Vagina (tissue), 2 donors: ENCODE measurements at regions of chr1 and their contacts with region 1.

Region 1: DNA sequence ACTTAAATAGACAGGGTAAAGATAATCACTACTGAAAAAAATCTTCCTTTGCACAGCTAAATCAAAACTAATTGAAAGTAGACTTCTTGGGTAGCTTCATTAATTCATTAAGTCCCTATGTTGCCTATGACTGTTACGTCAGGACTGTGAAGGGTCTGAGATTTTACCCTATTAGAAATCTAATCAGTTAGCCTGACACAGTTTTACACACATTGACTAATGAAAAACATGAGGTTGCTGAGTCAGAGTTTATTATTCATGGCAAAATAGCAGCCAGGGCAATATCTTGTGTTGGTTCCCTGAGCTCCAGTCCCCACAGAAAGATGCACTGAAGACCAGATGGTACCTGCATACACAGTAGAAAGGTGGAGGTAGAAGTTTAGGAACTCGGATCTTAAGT is 262.5 kb upstream of the ZP4 start:
- DNase-seq: no peak
- H3K4me3 ChIP-seq: no peak overlapping the region
- H3K27ac ChIP-seq: no peak overlapping the region
- H3K4me1 ChIP-seq: no peaks in the 10 kb centered on the region
- H3K27me3 ChIP-seq: no peaks in the 10 kb centered on the region
- CTCF ChIP-seq: no peak
- POLR2A ChIP-seq: no peak

Region 2: GRCh38 chr1:237610157-237610556 is 543.1 kb before region 1 on chr1:
- intact Hi-C with region 1: no loop called
- DNase-seq: no peak
- H3K4me3 ChIP-seq: no peak overlapping the region
- H3K27ac ChIP-seq: no peak overlapping the region
- H3K4me1 ChIP-seq: no peaks in the 10 kb centered on the region
- H3K27me3 ChIP-seq: no peaks in the 10 kb centered on the region
- CTCF ChIP-seq: no peak
- POLR2A ChIP-seq: no peak

Region 3: DNA sequence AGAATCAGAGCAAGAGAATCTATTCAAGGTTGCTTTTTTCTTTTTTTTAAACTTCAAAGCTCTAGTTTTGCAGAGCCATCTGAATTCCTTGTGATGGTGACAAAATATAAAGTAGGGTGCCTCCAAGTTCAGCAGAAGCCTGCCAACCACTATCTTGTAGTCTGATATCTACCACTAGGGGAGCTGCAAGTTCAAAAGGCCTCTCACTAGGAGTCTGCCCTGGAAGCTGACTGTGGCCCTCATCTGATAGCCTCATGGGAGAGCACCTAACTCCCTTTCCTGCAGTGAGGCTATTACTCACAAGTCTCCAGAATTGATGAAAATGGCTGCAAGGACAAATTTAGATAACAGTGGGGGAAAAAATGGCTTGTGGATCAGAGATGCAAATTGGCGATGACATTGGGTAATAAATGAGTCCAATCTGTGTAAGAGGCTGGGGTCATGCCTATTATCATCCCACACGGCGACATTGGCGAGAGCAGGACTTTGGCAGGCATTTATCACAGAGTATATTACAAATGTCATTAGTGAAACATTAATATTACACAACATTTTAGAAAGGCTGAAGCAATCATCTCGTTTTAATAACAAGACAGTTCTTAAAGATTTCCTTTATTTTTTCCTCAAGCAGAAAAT is 251.8 kb before region 1 on chr1:
- intact Hi-C with region 1: no loop called
- DNase-seq: no peak
- H3K4me3 ChIP-seq: no peak overlapping the region
- H3K27ac ChIP-seq: no peak overlapping the region
- H3K4me1 ChIP-seq: no peaks in the 10 kb centered on the region
- H3K27me3 ChIP-seq: no peaks in the 10 kb centered on the region
- CTCF ChIP-seq: no peak
- POLR2A ChIP-seq: no peak

Region 4: DNA sequence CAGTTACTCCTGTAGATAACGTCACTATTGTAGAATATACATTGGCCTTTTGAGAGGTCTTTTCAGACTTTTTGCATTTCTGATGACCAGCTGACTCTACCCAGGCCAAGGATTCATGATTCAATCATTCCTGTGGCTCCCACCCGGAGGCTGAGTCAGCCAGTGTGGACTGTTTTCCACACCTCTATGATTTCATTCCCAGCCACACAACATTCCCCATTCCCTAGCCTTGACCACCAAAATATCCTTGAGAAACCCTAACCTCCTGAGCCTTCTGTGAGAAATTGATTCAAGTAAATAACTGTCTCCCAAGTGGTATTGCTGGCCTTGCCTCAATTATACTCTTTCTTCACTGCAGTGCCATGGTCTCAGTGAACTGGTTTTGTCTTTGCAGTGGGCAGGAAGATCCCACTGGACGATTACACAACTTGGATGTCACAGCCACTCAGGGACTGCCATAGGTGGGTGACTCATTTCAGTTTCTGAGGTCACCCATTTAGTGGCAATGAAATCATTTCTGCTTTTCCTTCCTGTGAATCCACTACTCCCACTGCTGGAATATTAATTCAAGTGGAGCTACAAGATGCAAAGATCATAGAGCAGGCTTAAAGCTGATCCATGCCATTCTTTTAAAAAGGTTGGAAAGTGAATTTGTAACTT is 256.1 kb after region 1 on chr1:
- intact Hi-C with region 1: no loop called
- DNase-seq: no peak
- H3K4me3 ChIP-seq: no peak overlapping the region
- H3K27ac ChIP-seq: no peak overlapping the region
- H3K4me1 ChIP-seq: no peaks in the 10 kb centered on the region
- H3K27me3 ChIP-seq: no peaks in the 10 kb centered on the region
- CTCF ChIP-seq: no peak
- POLR2A ChIP-seq: no peak

Region 5: GRCh38 chr1:240149484-240150094 is 1996.3 kb after region 1 on chr1:
- intact Hi-C with region 1: loop called (anchors 5 kb)
- DNase-seq: no peak
- H3K4me3 ChIP-seq: no peak overlapping the region
- H3K27ac ChIP-seq: no peak overlapping the region
- H3K4me1 ChIP-seq: no peaks in the 10 kb centered on the region
- H3K27me3 ChIP-seq: no peaks in the 10 kb centered on the region
- CTCF ChIP-seq: peak in 1 of 3 experiments; percentile 32
- POLR2A ChIP-seq: no peak